Posterior cingulate gyrus (tissue), 11 donors: ENCODE measurements at regions of chr9 and their contacts with region 1.

Region 1: GRCh38 chr9:70484210-70485130 is 70.0 kb upstream of the KLF9 start:
- DNase-seq: peak in 1 of 10 donors; percentile 37

Region 2: DNA sequence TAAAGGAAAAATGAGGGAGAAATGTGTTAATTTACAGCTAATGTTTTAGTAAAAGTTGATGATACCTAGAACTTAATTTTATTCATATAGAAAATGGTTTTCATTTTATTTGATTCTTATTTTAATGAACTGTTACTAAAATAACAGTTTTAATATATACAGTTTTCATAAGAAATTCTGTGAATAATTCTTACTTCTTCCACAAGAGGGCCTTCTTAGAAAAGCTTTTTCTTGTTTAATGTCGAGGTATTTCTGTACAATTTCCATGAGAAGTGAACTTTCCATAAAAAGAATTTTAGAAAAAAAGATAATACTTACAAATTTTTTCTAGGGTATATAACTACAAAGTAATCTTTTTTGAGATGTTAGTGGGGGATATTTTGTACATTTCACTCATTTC is 143.9 kb before region 1 on chr9:
- intact Hi-C with region 1: loop called (anchors 5 kb)
- DNase-seq: no peak